Activated T-helper 2 cell treated with anti-CD3 and anti-CD28 coated beads, Interferon-gamma antibody, Interleukin-2, Interleukin-4, amounts not matched to agents 10 μg/mL and 5 μg/mL and 100 μg/mL, durations not matched to agents 14 hours and 24 hours and 36 hours (primary cell): ENCODE measurements at regions of chrX and their contacts with region 1.

Region 1: GRCh38 chrX:13376857-13377549 is 57.1 kb upstream of the ATXN3L start:
- DNase-seq: no peak
- H3K4me3 Mint-ChIP-seq: no peak overlapping the region
- H3K27ac Mint-ChIP-seq: peak overlapping the region; percentile 11
- H3K4me1 Mint-ChIP-seq: peaks cover 36% of the 10 kb centered on the region
- H3K27me3 Mint-ChIP-seq: no peaks in the 10 kb centered on the region

Region 2: DNA sequence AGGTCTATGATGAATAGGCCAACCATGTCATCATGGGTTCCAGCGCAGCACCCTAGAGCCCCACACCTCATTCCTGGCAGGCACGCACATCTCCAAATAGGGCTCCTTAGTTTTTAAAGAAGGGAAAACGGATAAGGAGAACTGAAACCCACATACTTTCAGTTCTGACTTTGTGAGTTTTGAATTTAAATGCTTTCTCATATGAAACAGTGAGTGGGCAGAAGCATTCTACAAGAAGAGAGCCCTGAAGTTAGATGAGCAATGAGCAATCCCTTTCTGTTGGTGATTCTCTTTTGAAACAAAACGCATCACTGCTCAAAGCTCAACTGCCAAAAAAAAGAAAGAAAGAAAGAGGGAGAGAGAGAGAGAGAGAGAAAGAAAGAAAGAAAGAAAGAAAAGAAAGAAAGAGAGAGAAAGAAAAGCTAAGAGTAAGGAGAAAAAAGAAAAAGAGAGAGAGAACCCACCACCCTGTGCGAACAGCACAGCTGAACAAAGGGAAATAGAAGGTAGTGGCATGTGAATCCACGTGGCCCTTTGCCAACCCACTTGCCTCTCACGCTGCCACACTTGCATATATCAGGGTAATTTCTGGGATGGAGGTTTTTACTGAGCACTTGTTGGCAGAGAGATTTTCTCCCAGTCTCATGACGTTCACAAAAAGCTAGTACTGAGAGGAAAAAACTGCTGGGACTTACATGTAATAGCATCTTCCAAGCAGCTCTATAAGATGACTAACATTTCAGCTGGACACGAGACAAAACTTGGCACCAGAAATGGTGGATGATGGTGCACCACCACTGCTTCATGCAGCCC is 371.1 kb before region 1 on chrX:
- intact Hi-C with region 1: loop called (anchors 10 kb)
- DNase-seq: no peak
- H3K4me3 Mint-ChIP-seq: peak overlapping the region; percentile 87
- H3K27ac Mint-ChIP-seq: peak overlapping the region; percentile 100
- H3K4me1 Mint-ChIP-seq: peaks cover 60% of the 10 kb centered on the region
- H3K27me3 Mint-ChIP-seq: no peaks in the 10 kb centered on the region

Region 3: GRCh38 chrX:13263560-13264251 is 113.3 kb before region 1 on chrX:
- intact Hi-C with region 1: loop called (anchors 5 kb)
- DNase-seq: no peak
- H3K4me3 Mint-ChIP-seq: no peak overlapping the region
- H3K27ac Mint-ChIP-seq: no peak overlapping the region
- H3K4me1 Mint-ChIP-seq: no peaks in the 10 kb centered on the region
- H3K27me3 Mint-ChIP-seq: no peaks in the 10 kb centered on the region

Region 4: DNA sequence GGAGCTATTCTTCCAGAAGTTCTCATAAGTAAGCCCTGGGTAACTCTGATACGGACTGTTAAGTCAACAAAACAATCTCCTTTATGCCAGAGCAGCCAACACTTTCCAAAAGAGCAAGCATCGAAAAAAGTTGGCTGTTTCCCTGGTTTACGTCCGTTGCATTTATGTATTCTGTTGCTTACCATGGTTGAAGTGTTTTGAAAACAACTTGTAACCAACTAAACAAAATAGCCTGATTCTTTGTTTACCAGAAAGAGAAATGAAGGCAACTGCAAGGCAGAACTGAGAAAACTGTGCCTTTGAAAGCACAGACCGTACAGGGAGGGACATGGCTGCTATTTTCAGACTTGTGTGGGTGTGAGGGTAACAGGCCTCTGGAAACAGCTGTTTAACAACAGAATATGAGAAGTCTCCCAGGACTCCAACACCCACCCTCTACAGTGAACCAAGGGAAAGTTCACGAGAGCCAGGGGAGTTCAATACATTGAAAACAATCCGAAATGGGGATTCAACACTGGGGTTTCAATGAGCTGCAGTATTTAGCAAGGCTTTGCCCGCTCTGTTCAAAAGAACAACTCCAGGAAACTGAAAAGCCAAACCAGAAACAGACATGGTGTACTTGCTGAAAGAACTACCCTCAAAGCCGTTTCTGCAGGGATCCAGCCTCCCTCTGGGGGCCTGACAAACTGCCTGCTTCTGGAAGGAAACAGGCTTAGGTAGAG is 96.6 kb after region 1 on chrX:
- intact Hi-C with region 1: loop called (anchors 10 kb)
- DNase-seq: no peak
- H3K4me3 Mint-ChIP-seq: peak overlapping the region; percentile 69
- H3K27ac Mint-ChIP-seq: peak overlapping the region; percentile 88
- H3K4me1 Mint-ChIP-seq: peaks cover 32% of the 10 kb centered on the region
- H3K27me3 Mint-ChIP-seq: no peaks in the 10 kb centered on the region